Transverse colon (tissue), 4 donors: ENCODE measurements at regions of chr7 and their contacts with region 1.

Region 1: DNA sequence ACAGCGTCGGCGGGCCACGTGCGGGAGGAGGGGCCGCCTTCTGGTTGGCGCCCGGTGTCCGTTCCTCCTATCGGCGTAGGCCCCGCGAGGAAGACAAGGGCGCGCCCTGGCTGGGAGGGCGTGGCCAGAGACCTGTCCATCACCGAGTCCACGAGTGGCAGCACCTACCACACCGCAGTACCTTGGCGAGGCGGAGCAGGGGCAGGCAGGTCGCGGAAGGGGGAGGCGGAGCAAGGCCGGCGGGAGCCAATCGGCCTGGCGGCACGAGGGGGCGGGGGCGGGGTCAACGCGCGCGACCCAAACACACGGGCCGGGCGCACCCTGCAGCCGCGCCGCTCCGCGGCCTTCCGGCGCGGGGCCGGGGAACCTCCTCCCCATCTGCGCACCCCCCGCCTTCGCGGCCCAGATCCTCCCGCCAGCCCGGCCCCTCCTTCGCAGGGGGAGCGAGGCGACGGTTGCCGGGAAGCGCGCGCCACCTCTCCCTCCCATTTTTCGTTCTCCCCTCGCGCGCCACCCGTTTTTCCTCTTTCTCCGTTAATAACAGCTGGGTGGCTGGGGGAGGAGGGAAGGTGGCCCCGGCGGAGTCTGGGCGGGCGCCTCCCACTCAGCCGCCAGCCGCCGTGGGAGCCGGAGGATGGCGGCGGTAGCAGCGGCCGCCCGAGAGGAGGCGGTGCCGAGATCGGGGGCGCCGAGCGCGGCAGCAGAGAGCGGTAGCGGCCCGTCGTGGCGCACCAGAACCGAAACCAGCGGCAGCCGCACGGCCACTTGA is at the start of gene ZNRF2:
- DNase-seq: peak; percentile 99
- H3K4me3 ChIP-seq: peak within 1 kb of the TSS; percentile 78 to 99 (median 96)
- H3K27ac ChIP-seq: peak within 1 kb of the TSS; percentile 99 to 100 (median 100)
- H3K4me1 ChIP-seq: peaks cover 5 to 51% (median 34%) of the 10 kb centered on the region in 4 donors
- H3K27me3 ChIP-seq: no peaks in the 10 kb centered on the region
- CTCF ChIP-seq: peak; percentile 44 to 74 (median 57)
- EP300 ChIP-seq: peak; percentile 34
- POLR2A ChIP-seq: peak; percentile 89
- total RNA-seq, gene ZNRF2: 60.8 to 83.0 (median 69.6) TPM

Region 2: DNA sequence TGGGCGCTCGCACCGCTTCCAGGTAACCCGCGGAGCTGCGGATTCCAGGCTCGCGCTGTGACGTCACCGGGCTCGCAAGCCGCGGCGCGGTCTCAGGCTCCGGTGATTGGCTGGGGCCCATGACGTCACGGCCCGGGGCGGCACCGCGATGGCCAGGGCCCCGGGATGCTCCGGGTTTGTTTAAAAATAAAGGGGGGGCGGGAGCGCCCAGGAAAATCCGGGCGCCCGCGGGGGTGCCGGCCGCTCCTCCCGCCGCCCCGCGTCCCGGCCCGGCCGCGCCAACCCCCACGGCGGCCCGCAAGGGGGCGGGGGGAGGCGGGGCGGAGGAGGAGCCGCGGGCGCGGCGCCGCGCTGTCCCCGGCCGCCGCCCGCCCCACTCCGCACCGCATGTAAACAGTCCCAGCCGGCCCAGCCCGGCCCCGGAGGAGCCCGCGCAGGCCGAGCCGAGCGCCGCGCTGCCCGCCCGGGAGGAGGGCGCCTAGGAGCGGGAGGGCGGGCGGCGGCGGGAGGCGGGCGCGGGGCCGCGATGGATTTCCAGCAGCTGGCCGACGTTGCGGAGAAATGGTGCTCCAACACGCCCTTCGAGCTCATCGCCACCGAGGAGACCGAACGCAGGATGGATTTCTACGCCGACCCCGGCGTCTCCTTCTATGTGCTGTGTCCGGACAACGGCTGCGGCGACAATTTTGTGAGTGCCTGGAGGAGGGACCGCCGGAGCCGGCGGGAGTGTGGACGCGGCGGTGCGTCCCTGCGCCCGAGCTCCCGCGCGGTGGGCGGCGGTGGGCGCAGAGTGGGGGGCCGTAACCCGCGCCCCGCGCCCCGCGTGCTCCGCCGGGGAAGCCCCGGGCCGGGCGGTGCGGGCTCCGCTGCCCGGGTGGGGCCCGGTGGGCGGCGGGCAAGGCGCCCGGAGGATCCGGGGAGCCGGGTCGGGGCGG is 149.6 kb before region 1 on chr7 and contains the start of gene MTURN:
- in situ Hi-C with region 1: no loop called
- intact Hi-C with region 1: no loop called
- DNase-seq: peak; percentile 92
- H3K4me3 ChIP-seq: peak within 1 kb of the TSS; percentile 61 to 98 (median 77)
- H3K27ac ChIP-seq: peak within 1 kb of the TSS; percentile 92 to 95 (median 93)
- H3K4me1 ChIP-seq: peaks cover 4 to 17% (median 8%) of the 10 kb centered on the region in 4 donors
- H3K27me3 ChIP-seq: no peaks in the 10 kb centered on the region
- CTCF ChIP-seq: peak in 1 of 5 experiments; percentile 2
- EP300 ChIP-seq: no peak
- POLR2A ChIP-seq: no peak
- total RNA-seq, gene MTURN: 7.9 to 28.3 (median 15.0) TPM

Region 3: DNA sequence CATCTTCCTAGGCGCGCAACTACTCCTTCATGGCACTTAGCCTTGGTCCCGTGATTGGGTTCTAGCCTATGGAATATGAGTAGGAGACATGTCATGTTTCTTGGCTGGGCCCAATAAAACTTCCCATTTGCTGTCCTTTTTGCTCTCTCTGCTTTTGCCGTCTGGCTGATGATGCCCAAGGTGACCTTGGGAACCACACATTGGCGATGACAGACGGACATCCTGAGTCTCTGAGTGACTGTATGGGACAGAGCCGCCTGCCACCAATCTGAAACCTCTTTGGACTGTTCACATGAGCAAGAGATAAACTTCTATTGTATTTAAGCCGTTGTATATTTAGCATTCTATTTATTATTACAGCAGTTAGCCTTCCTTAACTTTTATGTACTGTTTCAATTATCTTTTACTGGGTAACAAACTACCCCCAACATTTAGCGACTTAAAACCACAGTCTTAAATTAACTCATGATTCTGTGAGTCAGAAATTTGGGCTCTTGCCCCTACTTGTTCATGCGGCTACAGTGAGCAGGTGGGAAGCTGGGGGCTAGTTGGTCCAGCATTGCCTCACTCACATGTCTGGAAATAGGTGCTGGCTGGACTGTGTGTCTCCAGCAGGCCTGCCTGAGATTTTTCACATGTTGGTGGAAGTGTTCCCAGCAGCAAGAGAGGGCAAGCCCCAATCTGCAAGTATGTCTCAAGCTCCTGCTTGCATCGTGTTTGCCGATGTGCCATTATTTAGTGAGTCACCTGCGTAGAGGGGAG is 122.4 kb after region 1 on chr7:
- in situ Hi-C with region 1: loop called in 1 of 4 experiments (anchors 10 kb)
- intact Hi-C with region 1: no loop called
- DNase-seq: no peak
- H3K4me3 ChIP-seq: no peak overlapping the region
- H3K27ac ChIP-seq: no peak overlapping the region
- H3K4me1 ChIP-seq: no peaks in the 10 kb centered on the region
- H3K27me3 ChIP-seq: no peaks in the 10 kb centered on the region
- CTCF ChIP-seq: no peak
- EP300 ChIP-seq: no peak
- POLR2A ChIP-seq: no peak

Region 4: DNA sequence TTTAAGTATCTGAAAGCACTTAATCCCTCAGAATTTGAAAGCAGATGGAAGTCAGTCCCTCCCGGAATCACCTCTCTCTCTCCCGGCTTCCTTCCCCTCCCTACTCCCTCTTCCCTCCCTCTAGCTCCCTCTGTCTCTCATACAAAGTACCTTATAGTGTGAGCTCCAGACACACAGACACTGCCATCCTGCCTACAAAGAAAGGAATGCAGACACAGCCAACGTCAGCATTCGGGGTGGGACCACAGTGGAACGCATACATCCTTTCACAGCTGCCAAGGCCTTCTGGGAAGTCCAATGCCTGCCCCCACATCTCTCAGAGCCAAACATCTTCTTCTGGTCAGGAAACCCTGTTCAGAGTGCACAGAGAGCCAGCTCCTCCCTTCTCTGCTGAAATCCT is 184.8 kb after region 1 on chr7:
- in situ Hi-C with region 1: loop called in 1 of 4 experiments (anchors 25 kb)
- intact Hi-C with region 1: no loop called
- DNase-seq: peak; percentile 71
- H3K4me3 ChIP-seq: no peak overlapping the region
- H3K27ac ChIP-seq: peak overlapping the region; percentile 72 to 83 (median 78)
- H3K4me1 ChIP-seq: peaks cover 26 to 72% (median 51%) of the 10 kb centered on the region in 4 donors
- H3K27me3 ChIP-seq: no peaks in the 10 kb centered on the region
- CTCF ChIP-seq: peak; percentile 21 to 52 (median 36)
- EP300 ChIP-seq: peak; percentile 86
- POLR2A ChIP-seq: no peak